Activated B cell treated with CpG ODN at 0.5 μM for 24 hours (primary cell): ENCODE measurements at regions of chr2 and their contacts with region 1.

Region 1: DNA sequence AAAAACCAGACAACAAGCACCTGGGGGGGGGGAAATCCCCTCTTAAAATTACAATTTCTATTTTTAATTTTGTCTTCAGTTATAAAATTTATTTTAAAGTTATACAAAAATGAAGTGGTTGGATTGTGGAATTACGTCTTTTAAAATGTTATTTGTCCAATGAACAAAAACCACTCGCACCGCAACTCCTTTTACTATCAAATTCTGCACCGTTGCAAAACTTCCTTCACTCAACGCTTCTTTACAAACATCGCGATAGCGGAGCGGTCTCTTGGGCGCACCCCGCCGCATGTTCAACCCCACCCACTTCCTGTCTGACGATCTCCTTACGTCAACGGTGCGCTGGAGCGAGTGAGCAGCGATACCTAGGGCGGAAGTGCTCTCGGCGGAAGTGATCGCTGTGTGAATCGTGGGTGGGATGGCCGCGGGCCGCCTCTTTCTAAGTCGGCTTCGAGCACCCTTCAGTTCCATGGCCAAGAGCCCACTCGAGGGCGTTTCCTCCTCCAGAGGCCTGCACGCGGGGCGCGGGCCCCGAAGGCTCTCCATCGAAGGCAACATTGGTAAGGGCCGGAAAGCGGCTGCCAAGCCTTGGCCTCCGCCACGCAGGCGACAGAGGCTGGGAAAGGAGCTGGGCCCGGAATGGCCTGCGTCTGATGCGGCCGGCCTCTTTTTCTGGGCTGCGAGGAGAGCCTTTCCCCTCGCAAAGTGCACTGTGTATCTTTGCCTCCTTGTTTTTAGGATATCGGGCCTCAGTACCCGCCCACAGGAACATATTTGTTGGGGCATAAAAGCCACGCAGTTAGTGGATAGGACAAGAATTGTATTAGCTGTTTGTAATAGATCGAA is at the start of gene DGUOK:
- DNase-seq: peak; percentile 88
- ATAC-seq: peak; percentile 95
- H3K4me3 Mint-ChIP-seq: peak within 1 kb of the TSS; percentile 92
- H3K27ac Mint-ChIP-seq: peak within 1 kb of the TSS; percentile 93
- H3K4me1 Mint-ChIP-seq: peaks cover 60% of the 10 kb centered on the region
- H3K27me3 Mint-ChIP-seq: no peaks in the 10 kb centered on the region
- CTCF ChIP-seq: no peak
- total RNA-seq, gene DGUOK: 70.1 and 77.4 TPM in 2 replicates

Region 2: GRCh38 chr2:73812635-73813034 is 114.1 kb before region 1 on chr2:
- CTCF ChIA-PET with region 1: no interaction called
- POLR2A ChIA-PET with region 1: no interaction called
- intact Hi-C with region 1: no loop called
- DNase-seq: no peak
- ATAC-seq: no peak
- H3K4me3 Mint-ChIP-seq: no peak overlapping the region
- H3K27ac Mint-ChIP-seq: no peak overlapping the region
- H3K4me1 Mint-ChIP-seq: no peaks in the 10 kb centered on the region
- H3K27me3 Mint-ChIP-seq: peaks cover 8% of the 10 kb centered on the region
- CTCF ChIP-seq: no peak

Region 3: GRCh38 chr2:73907840-73908452 is 18.8 kb before region 1 on chr2:
- CTCF ChIA-PET with region 1: interaction called, 5 read pairs
- POLR2A ChIA-PET with region 1: no interaction called
- intact Hi-C with region 1: loop called (anchors 1 kb)
- DNase-seq: peak; percentile 23
- ATAC-seq: peak; percentile 93
- H3K4me3 Mint-ChIP-seq: no peak overlapping the region
- H3K27ac Mint-ChIP-seq: no peak overlapping the region
- H3K4me1 Mint-ChIP-seq: peaks cover 2% of the 10 kb centered on the region
- H3K27me3 Mint-ChIP-seq: no peaks in the 10 kb centered on the region
- CTCF ChIP-seq: no peak

Region 4: DNA sequence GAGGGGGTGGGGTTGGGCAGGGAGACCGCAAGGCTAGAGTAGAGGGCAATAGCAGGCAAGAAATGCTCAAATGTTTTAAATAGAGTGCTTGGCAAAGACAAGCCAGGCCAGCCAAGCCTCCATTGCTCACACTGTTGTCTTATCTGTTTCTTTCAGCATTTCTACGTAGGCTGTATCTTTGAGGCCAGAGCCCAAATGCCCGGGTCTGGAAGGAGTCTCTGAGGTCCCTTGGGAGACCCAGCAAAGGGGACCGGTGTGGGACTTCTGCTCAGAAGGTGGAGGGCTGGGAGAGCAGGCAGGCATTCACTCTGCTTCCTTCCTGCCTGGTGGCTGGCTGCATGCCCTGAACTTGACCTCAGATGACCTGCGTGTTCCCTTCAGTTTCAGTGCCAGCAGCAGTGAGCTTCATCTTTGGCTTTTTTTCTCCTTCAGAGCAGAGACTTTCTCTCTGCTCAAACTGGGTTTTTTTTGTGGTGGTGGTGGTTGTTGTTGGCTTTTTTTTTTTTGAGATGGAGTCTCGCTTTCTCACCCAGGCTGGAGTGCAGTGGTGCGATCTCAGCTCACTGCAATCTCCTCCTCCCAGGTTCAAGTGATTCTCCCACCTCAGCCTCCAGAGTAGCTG is 44.2 kb after region 1 on chr2:
- CTCF ChIA-PET with region 1: no interaction called
- POLR2A ChIA-PET with region 1: interaction called, 4 read pairs
- intact Hi-C with region 1: loop called (anchors 2 kb)
- DNase-seq: no peak
- ATAC-seq: peak; percentile 78
- H3K4me3 Mint-ChIP-seq: peak overlapping the region; percentile 72
- H3K27ac Mint-ChIP-seq: peak overlapping the region; percentile 54
- H3K4me1 Mint-ChIP-seq: peaks cover 49% of the 10 kb centered on the region
- H3K27me3 Mint-ChIP-seq: no peaks in the 10 kb centered on the region
- CTCF ChIP-seq: no peak

Region 5: GRCh38 chr2:74031221-74031620 is 104.5 kb after region 1 on chr2:
- CTCF ChIA-PET with region 1: no interaction called
- POLR2A ChIA-PET with region 1: interaction called, 11 read pairs
- intact Hi-C with region 1: loop called (anchors 1 kb)
- DNase-seq: no peak
- ATAC-seq: no peak
- H3K4me3 Mint-ChIP-seq: peak overlapping the region; percentile 90
- H3K27ac Mint-ChIP-seq: peak overlapping the region; percentile 99
- H3K4me1 Mint-ChIP-seq: peaks cover 84% of the 10 kb centered on the region
- H3K27me3 Mint-ChIP-seq: no peaks in the 10 kb centered on the region
- CTCF ChIP-seq: no peak

Region 6: GRCh38 chr2:74198461-74199274 is 272.0 kb after region 1 on chr2 and contains the start of gene MTHFD2:
- CTCF ChIA-PET with region 1: no interaction called
- POLR2A ChIA-PET with region 1: no interaction called
- intact Hi-C with region 1: loop called (anchors 1 kb)
- DNase-seq: peak; percentile 87
- ATAC-seq: peak; percentile 87
- H3K4me3 Mint-ChIP-seq: peak within 1 kb of the TSS; percentile 99
- H3K27ac Mint-ChIP-seq: peak within 1 kb of the TSS; percentile 100
- H3K4me1 Mint-ChIP-seq: peaks cover 34% of the 10 kb centered on the region
- H3K27me3 Mint-ChIP-seq: no peaks in the 10 kb centered on the region
- CTCF ChIP-seq: peak; percentile 50
- total RNA-seq, gene MTHFD2: 135 and 150 TPM in 2 replicates